ENCODE measurements at regions of chr2 and their contacts with region 1.

Region 1: GRCh38 chr2:207113414-207113813 is 52.3 kb downstream of the KLF7 start:
- DNase-seq: no peak
- H3K4me3 ChIP-seq: no peak overlapping the region
- H3K27ac ChIP-seq: no peak overlapping the region
- H3K4me1 ChIP-seq: peaks cover 0 to 2% (median 0%) of the 10 kb centered on the region in 4 donors
- H3K27me3 ChIP-seq: no peaks in the 10 kb centered on the region
- CTCF ChIP-seq: no peak
- EP300 ChIP-seq: no peak
- POLR2A ChIP-seq: no peak

Region 2: DNA sequence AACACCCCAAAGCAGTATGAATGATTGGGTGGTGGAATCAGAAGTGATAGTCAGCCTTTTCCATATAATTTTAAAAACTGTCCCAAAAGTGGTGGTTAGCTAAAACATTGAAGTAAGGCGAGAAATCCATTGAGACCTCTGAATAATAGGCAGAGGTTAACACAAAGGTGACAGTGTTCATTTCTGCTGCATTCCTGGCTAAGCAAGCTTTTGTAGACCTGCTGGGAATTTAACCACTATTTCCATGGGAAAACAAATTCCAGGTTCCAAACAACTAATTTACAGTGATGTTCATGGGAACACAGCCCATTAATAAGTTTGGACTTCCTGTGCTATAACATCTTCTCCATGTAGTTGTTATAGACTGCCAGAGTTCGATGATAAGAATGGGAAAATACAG is 1021.1 kb before region 1 on chr2:
- in situ Hi-C with region 1: no loop called
- intact Hi-C with region 1: loop called (anchors 5 kb)
- DNase-seq: no peak
- H3K4me3 ChIP-seq: no peak overlapping the region
- H3K27ac ChIP-seq: no peak overlapping the region
- H3K4me1 ChIP-seq: peaks cover 0 to 16% (median 5%) of the 10 kb centered on the region in 4 donors
- H3K27me3 ChIP-seq: no peaks in the 10 kb centered on the region
- CTCF ChIP-seq: no peak
- EP300 ChIP-seq: no peak
- POLR2A ChIP-seq: no peak

Region 3: DNA sequence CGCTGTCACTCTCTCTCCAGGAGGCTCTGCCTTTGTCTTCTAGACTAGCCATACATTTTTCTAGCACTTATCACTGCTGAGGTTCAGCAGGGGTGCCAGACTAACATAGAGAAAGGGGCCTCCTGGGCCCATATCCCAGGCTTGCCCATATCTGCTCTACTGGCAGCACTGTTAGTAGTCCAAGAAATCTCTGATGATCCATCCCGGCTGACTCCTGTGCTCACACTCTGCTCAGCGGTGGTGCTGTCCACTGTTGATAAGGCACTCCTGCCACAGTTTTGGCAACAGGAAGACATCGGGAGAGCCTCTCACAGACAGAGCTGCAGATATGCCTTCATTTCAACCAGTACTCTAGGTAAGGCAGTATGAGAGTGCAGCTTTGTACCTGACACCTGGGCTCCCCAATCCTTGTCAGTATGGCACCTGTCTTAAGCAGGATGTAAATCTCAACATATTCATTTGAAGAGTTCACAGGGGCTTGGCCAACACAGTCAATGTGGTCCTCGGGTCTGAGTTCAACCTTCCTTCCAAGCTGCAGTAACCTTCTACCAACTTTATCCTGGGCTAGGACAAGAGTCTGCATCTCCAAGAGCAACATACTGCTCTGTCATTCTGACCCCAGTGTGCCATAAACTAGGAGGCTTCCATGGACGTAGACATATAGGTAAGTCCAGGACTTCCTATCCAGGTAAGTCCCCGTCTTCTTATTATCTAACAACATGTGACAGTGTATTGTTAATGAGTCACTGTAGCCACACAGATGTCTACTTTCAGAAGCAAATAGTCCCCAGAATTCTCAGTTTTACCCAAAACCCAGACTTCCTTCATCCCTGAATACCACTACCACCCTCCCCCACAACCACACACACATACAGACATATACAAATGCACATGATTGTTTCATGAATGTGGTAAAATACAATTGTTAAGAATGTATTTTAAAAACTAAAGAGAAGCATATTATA is 36.1 kb after region 1 on chr2:
- in situ Hi-C with region 1: no loop called
- intact Hi-C with region 1: no loop called
- DNase-seq: no peak
- H3K4me3 ChIP-seq: no peak overlapping the region
- H3K27ac ChIP-seq: peak overlapping the region; percentile 14 to 53 (median 45)
- H3K4me1 ChIP-seq: peaks cover 32 to 65% (median 44%) of the 10 kb centered on the region in 4 donors
- H3K27me3 ChIP-seq: no peaks in the 10 kb centered on the region
- CTCF ChIP-seq: no peak
- EP300 ChIP-seq: no peak
- POLR2A ChIP-seq: no peak

Measured in transverse colon (tissue), 4 donors.